CD4-positive, alpha-beta T cell (primary cell): ENCODE measurements at regions of chr10 and their contacts with region 1.

Region 1: DNA sequence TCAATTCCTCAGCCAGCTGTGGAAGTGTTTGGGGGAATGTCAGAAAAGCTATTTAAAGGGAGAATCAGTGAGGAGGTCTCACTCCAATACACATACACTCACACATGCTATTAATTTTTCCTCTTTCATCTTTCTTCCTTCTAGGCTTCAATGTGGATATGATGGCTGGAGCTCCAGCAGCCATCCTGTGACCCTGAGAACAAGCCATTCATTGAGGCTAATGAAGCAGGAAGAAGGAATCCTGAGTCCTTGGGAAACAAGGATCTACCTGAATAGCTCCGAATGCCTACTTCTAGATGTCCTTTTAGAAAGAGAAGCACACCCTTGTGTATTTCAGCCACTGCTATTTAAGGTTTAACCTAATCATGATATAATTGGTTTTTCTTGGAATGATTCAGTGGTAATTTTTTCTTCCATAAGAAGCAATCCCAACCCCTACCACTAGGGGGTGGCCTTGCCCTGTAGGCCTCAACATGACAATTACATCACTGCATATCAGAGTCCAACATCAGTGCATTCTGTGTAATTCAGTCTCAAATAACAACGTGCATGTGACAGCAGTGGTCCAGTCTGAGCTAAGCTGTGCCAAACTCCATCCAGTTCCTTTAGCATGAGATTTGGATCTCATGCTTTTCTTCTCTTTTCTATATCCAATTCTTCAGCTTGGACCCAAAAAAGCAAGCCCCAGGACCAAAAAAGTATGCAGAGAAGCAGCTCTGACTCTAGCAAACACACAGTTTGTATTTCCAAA is 85.3 kb upstream of the ANKRD1 start:
- DNase-seq: peak; percentile 34 to 84 (median 55)
- ATAC-seq: peak; percentile 92
- H3K4me3 ChIP-seq: no peak overlapping the region
- H3K4me3 Mint-ChIP-seq: peak overlapping the region; percentile 47
- H3K27ac ChIP-seq: no peak overlapping the region
- H3K27ac Mint-ChIP-seq: peak overlapping the region; percentile 13
- H3K4me1 ChIP-seq: peaks cover 8% of the 10 kb centered on the region
- H3K4me1 Mint-ChIP-seq: peaks cover 12% of the 10 kb centered on the region
- H3K27me3 ChIP-seq: no peaks in the 10 kb centered on the region
- H3K27me3 Mint-ChIP-seq: no peaks in the 10 kb centered on the region
- CTCF ChIP-seq: peak; percentile 92

Region 2: DNA sequence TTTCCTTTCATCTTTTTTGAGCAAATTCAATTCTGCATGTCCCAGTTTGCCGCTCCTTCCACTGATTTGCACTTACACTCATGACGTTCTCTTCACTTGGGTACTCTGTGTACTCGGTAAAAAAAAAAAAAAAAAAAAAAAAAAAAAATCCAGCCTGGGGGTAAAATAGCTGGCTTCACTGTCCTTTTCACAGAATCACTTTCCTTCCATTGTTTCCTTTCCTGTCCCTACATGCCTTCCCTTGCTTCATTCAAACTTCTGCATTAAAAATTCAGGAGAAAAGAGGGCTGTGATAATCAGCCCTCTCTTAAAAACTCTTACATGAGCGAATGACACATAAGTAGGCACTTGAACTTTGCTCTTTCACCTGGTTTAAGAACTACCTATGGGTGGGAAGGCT is 94.0 kb before region 1 on chr10:
- CTCF ChIA-PET with region 1: no interaction called
- POLR2A ChIA-PET with region 1: no interaction called
- intact Hi-C with region 1: loop called (anchors 1 to 5 kb)
- DNase-seq: no peak
- ATAC-seq: no peak
- H3K4me3 ChIP-seq: no peak overlapping the region
- H3K4me3 Mint-ChIP-seq: no peak overlapping the region
- H3K27ac ChIP-seq: no peak overlapping the region
- H3K27ac Mint-ChIP-seq: no peak overlapping the region
- H3K4me1 ChIP-seq: peaks cover 4% of the 10 kb centered on the region
- H3K4me1 Mint-ChIP-seq: peaks cover 4% of the 10 kb centered on the region
- H3K27me3 ChIP-seq: no peaks in the 10 kb centered on the region
- H3K27me3 Mint-ChIP-seq: peaks cover 4% of the 10 kb centered on the region
- CTCF ChIP-seq: no peak

Region 3: GRCh38 chr10:90947030-90947940 is 58.9 kb before region 1 on chr10:
- CTCF ChIA-PET with region 1: no interaction called
- POLR2A ChIA-PET with region 1: no interaction called
- intact Hi-C with region 1: no loop called
- DNase-seq: no peak
- ATAC-seq: peak; percentile 41
- H3K4me3 ChIP-seq: no peak overlapping the region
- H3K4me3 Mint-ChIP-seq: no peak overlapping the region
- H3K27ac ChIP-seq: no peak overlapping the region
- H3K27ac Mint-ChIP-seq: peak overlapping the region; percentile 34
- H3K4me1 ChIP-seq: peaks cover 3% of the 10 kb centered on the region
- H3K4me1 Mint-ChIP-seq: peaks cover 21% of the 10 kb centered on the region
- H3K27me3 ChIP-seq: no peaks in the 10 kb centered on the region
- H3K27me3 Mint-ChIP-seq: no peaks in the 10 kb centered on the region
- CTCF ChIP-seq: no peak

Region 4: GRCh38 chr10:91251430-91252056 is 245.4 kb after region 1 on chr10:
- CTCF ChIA-PET with region 1: interaction called, 37 read pairs
- POLR2A ChIA-PET with region 1: interaction called, 11 read pairs
- intact Hi-C with region 1: loop called (anchors 1 kb)
- DNase-seq: peak; percentile 26 to 82 (median 36)
- ATAC-seq: peak; percentile 90
- H3K4me3 ChIP-seq: no peak overlapping the region
- H3K4me3 Mint-ChIP-seq: no peak overlapping the region
- H3K27ac ChIP-seq: no peak overlapping the region
- H3K27ac Mint-ChIP-seq: no peak overlapping the region
- H3K4me1 ChIP-seq: peaks cover 6% of the 10 kb centered on the region
- H3K4me1 Mint-ChIP-seq: no peaks in the 10 kb centered on the region
- H3K27me3 ChIP-seq: no peaks in the 10 kb centered on the region
- H3K27me3 Mint-ChIP-seq: no peaks in the 10 kb centered on the region
- CTCF ChIP-seq: peak; percentile 99

Region 5: GRCh38 chr10:91409869-91410637 is 403.9 kb after region 1 on chr10 and contains the start of gene HECTD2:
- CTCF ChIA-PET with region 1: no interaction called
- POLR2A ChIA-PET with region 1: no interaction called
- intact Hi-C with region 1: loop called in 1 of 2 experiments (anchors 10 kb)
- DNase-seq: peak; percentile 61 to 94 (median 82)
- ATAC-seq: peak; percentile 85
- H3K4me3 ChIP-seq: peak within 1 kb of the TSS; percentile 92
- H3K4me3 Mint-ChIP-seq: peak within 1 kb of the TSS; percentile 92
- H3K27ac ChIP-seq: peak within 1 kb of the TSS; percentile 82 to 86
- H3K27ac Mint-ChIP-seq: peak within 1 kb of the TSS; percentile 86
- H3K4me1 ChIP-seq: peaks cover 14% of the 10 kb centered on the region
- H3K4me1 Mint-ChIP-seq: peaks cover 11% of the 10 kb centered on the region
- H3K27me3 ChIP-seq: peaks cover 3 to 8% of the 10 kb centered on the region in 2 experiments
- H3K27me3 Mint-ChIP-seq: no peaks in the 10 kb centered on the region
- CTCF ChIP-seq: peak; percentile 19
- total RNA-seq, gene HECTD2: 0.92 to 1.0 TPM